ENCODE measurements at regions of chr2 and their contacts with region 1.

Region 1: DNA sequence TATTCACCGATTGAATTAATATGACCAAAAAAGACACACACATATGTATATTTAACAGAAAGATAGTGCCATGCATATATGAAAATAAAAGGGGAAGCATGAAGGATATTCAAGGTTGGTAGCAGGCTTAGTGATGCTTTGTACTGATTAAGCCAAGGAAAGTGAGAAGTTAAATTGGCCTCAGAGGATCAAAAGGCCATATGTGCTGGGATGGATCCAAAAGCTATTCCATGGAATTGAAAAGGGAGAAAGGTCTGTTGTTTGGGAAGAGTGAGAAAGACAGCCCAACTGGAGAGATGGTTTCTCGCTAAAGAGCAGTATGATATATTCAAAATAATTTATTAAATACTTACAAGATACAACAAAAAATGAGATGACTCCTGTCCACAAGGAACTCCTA is 65.9 kb downstream of the INSIG2 start:
- DNase-seq: no peak
- H3K4me3 ChIP-seq: no peak overlapping the region
- H3K27ac ChIP-seq: no peak overlapping the region
- H3K4me1 ChIP-seq: no peaks in the 10 kb centered on the region
- H3K27me3 ChIP-seq: no peaks in the 10 kb centered on the region
- CTCF ChIP-seq: no peak

Region 2: GRCh38 chr2:118134650-118135049 is 19.5 kb before region 1 on chr2:
- CTCF ChIA-PET with region 1: no interaction called
- POLR2A ChIA-PET with region 1: no interaction called
- intact Hi-C with region 1: loop called (anchors 1 kb)
- DNase-seq: no peak
- H3K4me3 ChIP-seq: no peak overlapping the region
- H3K27ac ChIP-seq: no peak overlapping the region
- H3K4me1 ChIP-seq: no peaks in the 10 kb centered on the region
- H3K27me3 ChIP-seq: no peaks in the 10 kb centered on the region
- CTCF ChIP-seq: no peak

Region 3: GRCh38 chr2:118709786-118710185 is 555.6 kb after region 1 on chr2:
- CTCF ChIA-PET with region 1: no interaction called
- POLR2A ChIA-PET with region 1: no interaction called
- intact Hi-C with region 1: no loop called
- DNase-seq: no peak
- H3K4me3 ChIP-seq: no peak overlapping the region
- H3K27ac ChIP-seq: no peak overlapping the region
- H3K4me1 ChIP-seq: no peaks in the 10 kb centered on the region
- H3K27me3 ChIP-seq: peaks cover 11% of the 10 kb centered on the region
- CTCF ChIP-seq: no peak

Measured in PC-9 (cell line).